BJ (cell line): ENCODE measurements at regions of chr4 and their contacts with region 1.

Region 1: DNA sequence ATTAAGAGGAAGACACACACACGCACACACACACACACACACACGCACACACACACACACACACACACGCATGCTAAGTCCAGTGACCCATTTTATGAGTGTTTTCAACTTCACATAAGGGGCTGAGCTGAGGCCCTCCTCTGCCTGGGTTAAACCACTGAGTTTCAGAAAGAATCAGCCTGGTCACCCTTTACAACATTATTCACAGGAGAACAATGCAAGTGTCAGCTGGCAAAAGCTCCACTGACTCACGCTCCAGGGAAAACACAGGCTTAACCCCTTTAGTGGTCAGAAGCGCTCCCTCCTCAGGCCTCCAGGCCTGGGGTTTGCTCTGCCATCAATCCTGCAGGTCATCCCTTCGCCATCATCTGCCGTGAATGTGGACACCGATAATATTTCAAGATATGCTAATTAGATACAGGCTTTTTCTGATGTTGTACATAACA is 46.9 kb downstream of the ACOX3 start:
- DNase-seq: peak; percentile 96
- H3K4me3 ChIP-seq: no peak overlapping the region
- H3K27me3 ChIP-seq: no peaks in the 10 kb centered on the region
- CTCF ChIP-seq: peak; percentile 40

Region 2: GRCh38 chr4:8267077-8267476 is 126.5 kb before region 1 on chr4:
- CTCF ChIA-PET with region 1: interaction called, 3 read pairs
- POLR2A ChIA-PET with region 1: interaction called, 30 read pairs
- DNase-seq: no peak
- H3K4me3 ChIP-seq: no peak overlapping the region
- H3K27me3 ChIP-seq: peaks cover 6% of the 10 kb centered on the region; the same call in 1 of the 2 replicates
- CTCF ChIP-seq: peak; percentile 58

Region 3: DNA sequence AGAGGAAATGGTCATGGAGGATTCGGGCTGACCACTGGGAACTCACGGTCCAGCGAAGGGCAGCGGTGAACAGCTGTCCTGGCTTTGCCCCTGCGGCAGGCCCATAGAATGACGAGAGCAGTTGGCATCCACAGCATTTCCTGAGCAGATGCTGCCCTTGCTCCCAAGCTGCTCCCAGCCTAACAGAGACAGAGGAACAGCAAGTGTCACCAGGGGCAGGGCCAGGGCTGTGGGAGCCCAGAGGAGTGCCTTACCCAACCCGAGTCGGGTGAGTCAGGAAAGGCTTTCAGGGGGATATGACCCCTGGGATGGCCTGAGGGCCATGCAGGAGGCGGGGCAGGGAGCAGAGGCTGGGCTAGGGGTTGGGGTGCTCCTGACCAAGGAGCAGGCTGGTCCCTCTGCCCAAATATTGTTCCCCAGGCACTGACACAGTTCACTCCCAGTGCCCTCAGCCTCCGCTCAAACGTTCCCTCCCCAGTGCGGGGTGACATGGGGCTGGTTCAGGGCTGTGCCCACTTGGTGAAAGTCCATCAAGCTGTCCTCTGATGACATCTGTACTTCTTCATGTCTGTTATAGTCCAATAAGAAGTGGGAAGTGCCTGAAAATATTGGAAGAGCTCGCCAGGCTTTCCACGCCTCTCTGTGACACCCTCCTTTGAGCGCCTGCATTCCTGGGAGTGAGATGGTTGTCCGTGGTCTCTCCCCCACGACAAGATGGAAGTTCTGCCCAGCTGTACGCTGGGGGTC is 121.9 kb after region 1 on chr4:
- CTCF ChIA-PET with region 1: no interaction called
- POLR2A ChIA-PET with region 1: no interaction called
- DNase-seq: no peak
- H3K4me3 ChIP-seq: no peak overlapping the region
- H3K27me3 ChIP-seq: no peaks in the 10 kb centered on the region
- CTCF ChIP-seq: no peak